ENCODE measurements at regions of chr16 and their contacts with region 1.

Region 1: GRCh38 chr16:728131-728889 is 1.4 kb downstream of the HAGHL start:
- DNase-seq: no peak
- ATAC-seq: peak; percentile 60
- H3K4me3 ChIP-seq: peak overlapping the region; percentile 64 to 74
- H3K27ac ChIP-seq: peak overlapping the region; percentile 79
- H3K4me1 ChIP-seq: peaks cover 13% of the 10 kb centered on the region
- H3K27me3 ChIP-seq: no peaks in the 10 kb centered on the region
- CTCF ChIP-seq: no peak

Region 2: GRCh38 chr16:788394-789126 is 60.2 kb after region 1 on chr16 and contains the start of gene CHTF18:
- CTCF ChIA-PET with region 1: no interaction called
- POLR2A ChIA-PET with region 1: interaction called, 10 read pairs
- in situ Hi-C with region 1: no loop called
- intact Hi-C with region 1: no loop called
- DNase-seq: no peak
- ATAC-seq: peak; percentile 85
- H3K4me3 ChIP-seq: peak within 1 kb of the TSS; percentile 72 to 89
- H3K27ac ChIP-seq: peak within 1 kb of the TSS; percentile 79
- H3K4me1 ChIP-seq: peaks cover 4% of the 10 kb centered on the region
- H3K27me3 ChIP-seq: no peaks in the 10 kb centered on the region
- CTCF ChIP-seq: no peak
- total RNA-seq, gene CHTF18: 118 TPM

Region 3: GRCh38 chr16:1150511-1150982 is 422.2 kb after region 1 on chr16:
- CTCF ChIA-PET with region 1: interaction called, 10 read pairs
- POLR2A ChIA-PET with region 1: no interaction called
- in situ Hi-C with region 1: no loop called
- intact Hi-C with region 1: no loop called
- DNase-seq: no peak
- ATAC-seq: peak; percentile 29
- H3K4me3 ChIP-seq: no peak overlapping the region
- H3K27ac ChIP-seq: no peak overlapping the region
- H3K4me1 ChIP-seq: peaks cover 26% of the 10 kb centered on the region
- H3K27me3 ChIP-seq: no peaks in the 10 kb centered on the region
- CTCF ChIP-seq: no peak